ENCODE measurements at regions of chr20 and their contacts with region 1.

Region 1: DNA sequence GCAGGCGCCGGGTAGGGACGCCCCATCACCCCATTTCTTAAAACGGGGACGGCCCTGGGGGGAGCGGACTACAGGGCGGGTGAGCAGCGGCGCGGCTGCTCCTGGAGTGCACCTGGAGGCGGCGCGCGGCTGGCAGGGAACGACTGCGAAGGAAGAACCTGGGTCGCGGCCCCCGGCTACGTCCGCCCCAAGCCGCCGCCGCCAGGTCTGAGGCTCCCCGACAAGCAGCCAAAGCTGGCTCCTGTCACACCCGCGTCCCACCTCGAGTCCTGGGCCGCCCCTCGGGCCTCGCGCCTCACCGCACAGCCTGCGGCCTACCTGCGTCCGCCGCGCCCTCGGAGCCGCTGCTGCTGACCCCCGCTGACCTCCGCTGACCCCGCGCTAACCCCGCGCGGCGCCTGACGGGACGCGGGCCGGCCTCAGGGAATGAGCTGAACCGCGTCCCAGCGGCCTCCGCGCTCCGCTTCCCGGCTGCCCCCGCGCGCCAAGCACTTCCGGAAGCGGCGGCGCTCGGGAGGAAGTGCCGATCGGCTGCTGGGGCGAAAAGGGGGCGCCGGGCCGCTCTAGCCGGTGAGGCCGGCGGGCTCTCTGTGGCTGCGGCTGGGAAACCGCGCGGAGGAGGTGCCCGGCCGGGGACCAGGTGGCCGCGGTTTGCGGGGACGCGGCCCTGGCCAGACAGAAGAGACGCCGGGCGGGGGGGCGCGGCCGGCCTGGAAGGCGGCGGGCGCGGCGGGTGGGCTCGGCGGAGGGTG is at the starts of genes ARFRP1 and ZGPAT:
- DNase-seq: peak; percentile 84
- ATAC-seq: peak; percentile 89
- H3K4me3 ChIP-seq: peak within 1 kb of the TSS; percentile 79 to 99 (median 99)
- H3K27ac ChIP-seq: peak within 1 kb of the TSS; percentile 81
- H3K4me1 ChIP-seq: peaks cover 36% of the 10 kb centered on the region
- H3K27me3 ChIP-seq: no peaks in the 10 kb centered on the region; a peak in 1 of 5 replicates
- CTCF ChIP-seq: no peak; the same call in 1 of the 2 replicates
- EP300 ChIP-seq: peak; percentile 40 to 42; a peak in 2 of 4 replicates
- POLR2A ChIP-seq: peak in 1 of 2 experiments; percentile 28; a peak in 1 of 4 replicates
- RAD21 ChIP-seq: peak; percentile 78
- total RNA-seq, gene ARFRP1: 33.7 and 51.1 TPM in 2 replicates
- total RNA-seq, gene ZGPAT: 40.2 and 41.9 TPM in 2 replicates

Region 2: GRCh38 chr20:63657937-63658748 is 49.6 kb before region 1 on chr20 and contains the start of gene RTEL1:
- CTCF ChIA-PET with region 1: no interaction called
- POLR2A ChIA-PET with region 1: interaction called, 14 read pairs
- in situ Hi-C with region 1: no loop called
- intact Hi-C with region 1: no loop called
- DNase-seq: peak; percentile 93
- ATAC-seq: peak; percentile 93
- H3K4me3 ChIP-seq: peak within 1 kb of the TSS; percentile 78 to 95 (median 94)
- H3K27ac ChIP-seq: peak within 1 kb of the TSS; percentile 65
- H3K4me1 ChIP-seq: peaks cover 40% of the 10 kb centered on the region
- H3K27me3 ChIP-seq: no peaks in the 10 kb centered on the region; a peak in 1 of 5 replicates
- CTCF ChIP-seq: no peak; the same call in 1 of the 2 replicates
- EP300 ChIP-seq: peak; percentile 24 to 66; a peak in 3 of 4 replicates
- POLR2A ChIP-seq: peak; percentile 74 to 78
- RAD21 ChIP-seq: peak; percentile 79
- total RNA-seq, gene RTEL1: 10.9 and 21.8 TPM in 2 replicates

Region 3: GRCh38 chr20:63718996-63719395 is 11.3 kb after region 1 on chr20:
- CTCF ChIA-PET with region 1: no interaction called
- POLR2A ChIA-PET with region 1: interaction called, 55 read pairs
- in situ Hi-C with region 1: no loop called
- intact Hi-C with region 1: no loop called
- DNase-seq: no peak
- ATAC-seq: no peak
- H3K4me3 ChIP-seq: no peak overlapping the region
- H3K27ac ChIP-seq: peak overlapping the region; percentile 32
- H3K4me1 ChIP-seq: peaks cover 19% of the 10 kb centered on the region
- H3K27me3 ChIP-seq: no peaks in the 10 kb centered on the region
- CTCF ChIP-seq: no peak
- EP300 ChIP-seq: no peak
- POLR2A ChIP-seq: no peak
- RAD21 ChIP-seq: no peak

Region 4: DNA sequence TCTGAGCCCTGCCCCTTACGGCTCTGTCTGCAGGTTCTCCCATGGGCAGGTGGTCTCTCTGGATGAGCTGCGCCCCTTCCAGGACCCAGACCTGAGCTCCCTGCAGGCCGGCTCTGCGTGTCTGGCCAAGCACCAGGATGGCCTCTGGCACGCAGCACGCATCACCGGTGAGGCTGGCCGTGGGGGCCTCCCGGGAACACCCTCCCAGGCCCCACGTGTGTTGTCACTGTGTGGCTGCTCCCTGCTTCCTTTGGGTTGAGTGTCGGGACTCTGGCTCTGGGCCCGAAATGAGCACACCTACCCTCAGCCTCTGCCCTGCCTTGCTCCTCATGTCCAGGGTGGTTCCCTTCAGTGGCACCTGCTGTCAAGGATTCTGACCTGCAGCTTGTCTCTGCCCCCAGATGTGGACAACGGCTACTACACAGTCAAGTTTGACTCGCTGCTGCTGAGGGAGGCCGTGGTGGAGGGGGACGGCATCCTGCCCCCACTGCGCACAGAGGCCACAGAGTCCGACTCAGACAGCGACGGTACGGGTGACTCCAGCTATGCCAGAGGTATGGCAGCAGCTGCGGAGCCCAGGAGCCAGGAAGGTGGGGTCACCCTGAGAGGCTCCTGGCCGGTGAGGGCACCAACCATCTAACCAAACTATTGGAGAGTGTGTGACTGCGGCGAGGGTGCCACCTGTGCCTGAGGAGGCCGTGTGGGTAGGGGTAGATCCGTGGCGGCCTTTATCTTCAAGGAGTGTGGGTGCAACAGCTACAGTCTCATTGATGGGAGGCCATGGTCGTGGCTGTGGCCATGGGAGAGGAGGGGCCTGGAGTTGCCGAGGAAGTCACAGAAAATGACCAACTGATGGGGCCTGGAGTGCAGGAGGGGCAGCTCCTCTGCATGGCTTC is 25.7 kb after region 1 on chr20:
- CTCF ChIA-PET with region 1: interaction called, 8 read pairs
- POLR2A ChIA-PET with region 1: interaction called, 190 read pairs
- in situ Hi-C with region 1: no loop called
- intact Hi-C with region 1: no loop called
- DNase-seq: no peak
- ATAC-seq: no peak
- H3K4me3 ChIP-seq: no peak overlapping the region
- H3K27ac ChIP-seq: peak overlapping the region; percentile 93
- H3K4me1 ChIP-seq: peaks cover 48% of the 10 kb centered on the region
- H3K27me3 ChIP-seq: no peaks in the 10 kb centered on the region
- CTCF ChIP-seq: no peak
- EP300 ChIP-seq: no peak
- POLR2A ChIP-seq: no peak
- RAD21 ChIP-seq: no peak

Region 5: DNA sequence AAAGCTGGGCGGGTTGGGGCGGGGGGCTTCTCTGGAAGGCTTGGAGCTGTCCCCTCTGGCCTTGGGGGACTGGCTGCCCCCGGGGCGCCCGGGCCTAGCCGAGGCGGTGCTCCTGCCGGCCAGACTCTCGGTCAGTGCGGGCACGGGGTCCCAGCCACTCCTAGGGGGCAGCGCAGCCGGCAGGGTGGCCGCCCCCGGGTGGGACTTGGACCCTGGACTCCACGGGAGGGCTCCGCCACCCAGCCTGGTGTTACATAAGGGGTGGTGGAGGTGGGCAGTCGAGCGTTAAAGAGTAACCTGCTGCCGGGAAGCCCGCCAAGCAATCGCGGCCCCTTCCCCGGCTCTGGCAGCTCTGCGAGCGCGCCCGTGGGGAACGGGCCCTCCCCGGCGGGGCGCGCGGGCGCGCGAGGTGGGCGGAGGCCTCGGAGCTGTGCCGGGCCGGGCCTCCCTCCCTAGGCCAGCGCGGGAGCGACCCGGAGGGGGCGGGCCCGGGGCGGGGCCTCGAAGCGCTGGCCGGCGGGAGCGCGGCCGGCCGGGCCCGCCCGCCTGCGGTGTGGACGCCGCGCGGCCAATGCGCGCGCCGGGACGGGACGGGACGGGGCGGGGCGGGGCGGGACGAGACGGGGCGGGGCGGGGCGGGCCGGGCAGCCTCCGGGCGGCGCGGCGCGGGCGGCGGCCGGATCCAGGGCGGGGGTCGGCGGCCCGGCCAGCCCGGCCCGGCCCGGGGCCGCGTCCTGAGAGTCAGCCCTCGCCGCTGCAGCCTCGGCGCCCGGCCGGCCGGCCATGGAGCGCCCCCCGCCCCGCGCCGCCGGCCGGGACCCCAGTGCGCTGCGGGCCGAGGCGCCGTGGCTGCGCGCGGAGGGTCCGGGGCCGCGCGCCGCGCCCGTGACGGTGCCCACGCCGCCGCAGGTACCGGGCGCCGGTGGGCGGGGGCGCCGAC is 31.7 kb after region 1 on chr20 and contains the start of gene SLC2A4RG:
- CTCF ChIA-PET with region 1: interaction called, 8 read pairs
- POLR2A ChIA-PET with region 1: interaction called, 190 read pairs
- in situ Hi-C with region 1: loop called (anchors 5 kb)
- intact Hi-C with region 1: loop called (anchors 2 kb)
- DNase-seq: peak; percentile 94
- ATAC-seq: peak; percentile 15
- H3K4me3 ChIP-seq: peak within 1 kb of the TSS; percentile 74 to 93 (median 85)
- H3K27ac ChIP-seq: peak within 1 kb of the TSS; percentile 93
- H3K4me1 ChIP-seq: peaks cover 64% of the 10 kb centered on the region
- H3K27me3 ChIP-seq: no peaks in the 10 kb centered on the region
- CTCF ChIP-seq: peak; percentile 54
- EP300 ChIP-seq: peak; percentile 36 to 77; a peak in 3 of 4 replicates
- POLR2A ChIP-seq: peak in 1 of 2 experiments; percentile 54; a peak in 2 of 4 replicates
- RAD21 ChIP-seq: peak; percentile 76
- total RNA-seq, gene SLC2A4RG: 47.4 and 91.4 TPM in 2 replicates

Region 6: DNA sequence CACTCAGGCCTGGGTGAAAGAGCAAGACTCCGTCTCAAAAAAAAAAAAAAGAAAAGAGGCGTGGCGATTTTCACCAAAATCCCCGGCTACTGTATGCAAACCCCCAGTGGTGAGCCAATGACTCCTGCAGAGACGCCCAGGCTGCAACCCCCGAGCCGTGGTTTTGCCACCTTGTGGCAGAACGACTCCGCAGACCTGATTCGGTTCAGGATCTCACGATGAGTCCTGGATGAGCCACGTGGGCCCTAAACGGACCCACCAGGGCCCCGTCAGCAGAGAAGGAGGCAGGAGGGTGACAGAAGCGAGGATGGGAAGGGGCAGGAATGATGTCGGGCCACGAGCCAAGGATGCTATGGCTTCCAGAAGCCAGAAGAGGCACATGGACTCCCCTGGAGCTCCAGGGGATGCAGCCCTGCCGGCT is 74.3 kb after region 1 on chr20:
- CTCF ChIA-PET with region 1: interaction called, 12 read pairs
- POLR2A ChIA-PET with region 1: interaction called, 8 read pairs
- in situ Hi-C with region 1: loop called (anchors 10 kb)
- intact Hi-C with region 1: loop called (anchors 1 kb)
- DNase-seq: peak; percentile 60
- ATAC-seq: peak; percentile 84
- H3K4me3 ChIP-seq: peak overlapping the region in 1 of 3 experiments; percentile 25; a peak in 1 of 6 replicates
- H3K27ac ChIP-seq: no peak overlapping the region
- H3K4me1 ChIP-seq: peaks cover 21% of the 10 kb centered on the region
- H3K27me3 ChIP-seq: no peaks in the 10 kb centered on the region
- CTCF ChIP-seq: peak; percentile 78
- EP300 ChIP-seq: no peak
- POLR2A ChIP-seq: no peak
- RAD21 ChIP-seq: peak; percentile 66; the same call in 1 of the 2 replicates

Region 7: DNA sequence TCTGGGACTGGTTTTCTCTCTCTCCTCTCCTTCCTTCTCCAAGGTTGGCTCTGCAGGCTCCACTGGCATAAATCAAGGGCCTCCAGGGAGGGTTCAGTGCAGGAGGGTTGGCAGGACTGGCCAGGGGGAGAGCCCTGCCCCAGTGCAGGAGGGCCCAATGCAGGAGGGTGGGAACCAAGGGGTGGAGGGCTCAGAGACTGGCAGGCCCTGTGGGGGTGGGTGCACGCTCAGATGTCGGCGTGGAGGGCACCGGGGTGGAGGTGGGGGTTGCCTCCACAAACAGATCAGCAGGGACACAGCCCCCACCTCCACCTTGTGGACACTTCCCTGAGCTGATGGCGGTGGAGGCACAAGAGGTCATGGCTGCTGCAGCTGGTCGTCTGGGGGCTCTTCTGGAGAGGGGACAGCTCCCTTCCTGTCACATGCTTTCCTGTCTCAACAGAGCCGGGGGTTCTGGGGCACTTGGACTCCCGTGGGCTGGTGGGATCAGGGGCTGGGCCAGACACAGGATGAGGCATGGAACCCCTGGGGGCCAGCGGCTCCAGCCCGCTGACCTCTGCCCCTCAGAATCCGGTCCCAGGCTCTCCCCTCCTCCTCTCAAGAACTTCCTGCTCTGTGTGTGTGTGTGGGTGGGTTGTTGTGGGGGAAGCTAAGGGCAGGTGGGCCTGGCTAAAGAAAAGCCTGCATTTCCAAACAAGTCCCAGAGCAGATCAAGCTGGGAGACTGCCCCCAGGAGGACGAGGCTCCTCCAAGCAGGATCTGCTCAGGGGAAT is 150.9 kb after region 1 on chr20:
- CTCF ChIA-PET with region 1: interaction called, 15 read pairs
- POLR2A ChIA-PET with region 1: interaction called, 37 read pairs
- in situ Hi-C with region 1: loop called (anchors 5 kb)
- intact Hi-C with region 1: no loop called
- DNase-seq: peak; percentile 79
- ATAC-seq: peak; percentile 45
- H3K4me3 ChIP-seq: peak overlapping the region; percentile 42 to 65 (median 46)
- H3K27ac ChIP-seq: peak overlapping the region; percentile 47
- H3K4me1 ChIP-seq: peaks cover 68% of the 10 kb centered on the region
- H3K27me3 ChIP-seq: peaks cover 3 to 11% of the 10 kb centered on the region in 2 experiments; a peak in 4 of 5 replicates
- CTCF ChIP-seq: peak; percentile 73
- EP300 ChIP-seq: peak in 1 of 2 experiments; percentile 25; a peak in 1 of 4 replicates
- POLR2A ChIP-seq: no peak
- RAD21 ChIP-seq: peak; percentile 6; the same call in 1 of the 2 replicates

Region 8: DNA sequence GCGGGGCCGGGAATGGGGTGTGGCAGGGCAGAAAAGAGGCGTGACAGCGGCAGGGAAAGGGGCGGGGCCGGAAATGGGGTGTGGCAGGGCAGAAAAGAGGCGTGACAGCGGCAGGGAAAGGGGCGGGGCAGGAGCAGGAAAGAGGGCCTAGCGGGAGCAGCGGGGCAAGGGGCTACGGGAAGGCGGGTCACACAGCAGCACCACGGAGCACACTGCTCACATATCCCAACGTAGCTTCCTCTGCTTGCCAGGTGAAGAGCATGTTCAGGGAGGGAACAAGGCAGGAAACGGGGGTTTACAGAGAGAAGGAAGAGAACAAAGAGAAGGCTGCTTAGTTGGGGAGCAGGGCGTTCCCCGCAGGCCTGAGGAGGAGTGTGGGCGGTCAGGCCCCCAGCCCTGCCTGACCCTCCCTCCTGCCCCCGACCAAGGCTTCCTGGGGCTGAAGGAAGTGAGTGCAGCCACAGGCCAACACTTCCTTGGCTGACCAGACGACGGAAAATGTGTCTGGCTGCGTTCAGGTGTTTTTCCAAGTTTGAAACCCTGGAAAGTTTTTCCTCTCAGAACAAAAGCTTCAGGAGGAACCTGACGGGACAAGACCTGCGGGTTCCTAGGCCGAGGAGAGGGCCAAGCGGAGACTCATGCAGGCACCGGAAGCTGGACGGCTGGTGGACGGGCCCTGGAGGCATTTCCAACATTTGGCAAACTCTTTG is 234.7 kb after region 1 on chr20:
- CTCF ChIA-PET with region 1: no interaction called
- POLR2A ChIA-PET with region 1: no interaction called
- in situ Hi-C with region 1: no loop called
- intact Hi-C with region 1: no loop called
- DNase-seq: no peak
- ATAC-seq: no peak; the same call in 2 of the 3 replicates
- H3K4me3 ChIP-seq: no peak overlapping the region
- H3K27ac ChIP-seq: peak overlapping the region; percentile 11
- H3K4me1 ChIP-seq: no peaks in the 10 kb centered on the region
- H3K27me3 ChIP-seq: no peaks in the 10 kb centered on the region
- CTCF ChIP-seq: no peak
- EP300 ChIP-seq: no peak
- POLR2A ChIP-seq: peak in 1 of 2 experiments; percentile 23; a peak in 2 of 4 replicates
- RAD21 ChIP-seq: no peak